ENCODE measurements at regions of chr6 and their contacts with region 1.

Region 1: GRCh38 chr6:131914967-131915751 is 36.0 kb downstream of the CCN2 start:
- DNase-seq: peak in 1 of 2 donors; percentile 70
- ATAC-seq: peak; percentile 78
- H3K4me3 ChIP-seq: no peak overlapping the region
- H3K27ac ChIP-seq: no peak overlapping the region
- H3K4me1 ChIP-seq: no peaks in the 10 kb centered on the region
- H3K27me3 ChIP-seq: no peaks in the 10 kb centered on the region

Region 2: GRCh38 chr6:132136981-132137380 is 221.8 kb after region 1 on chr6:
- intact Hi-C with region 1: no loop called
- DNase-seq: no peak
- ATAC-seq: no peak
- H3K4me3 ChIP-seq: no peak overlapping the region
- H3K27ac ChIP-seq: no peak overlapping the region
- H3K4me1 ChIP-seq: peaks cover 3 to 15% of the 10 kb centered on the region in 2 donors
- H3K27me3 ChIP-seq: no peaks in the 10 kb centered on the region

Region 3: DNA sequence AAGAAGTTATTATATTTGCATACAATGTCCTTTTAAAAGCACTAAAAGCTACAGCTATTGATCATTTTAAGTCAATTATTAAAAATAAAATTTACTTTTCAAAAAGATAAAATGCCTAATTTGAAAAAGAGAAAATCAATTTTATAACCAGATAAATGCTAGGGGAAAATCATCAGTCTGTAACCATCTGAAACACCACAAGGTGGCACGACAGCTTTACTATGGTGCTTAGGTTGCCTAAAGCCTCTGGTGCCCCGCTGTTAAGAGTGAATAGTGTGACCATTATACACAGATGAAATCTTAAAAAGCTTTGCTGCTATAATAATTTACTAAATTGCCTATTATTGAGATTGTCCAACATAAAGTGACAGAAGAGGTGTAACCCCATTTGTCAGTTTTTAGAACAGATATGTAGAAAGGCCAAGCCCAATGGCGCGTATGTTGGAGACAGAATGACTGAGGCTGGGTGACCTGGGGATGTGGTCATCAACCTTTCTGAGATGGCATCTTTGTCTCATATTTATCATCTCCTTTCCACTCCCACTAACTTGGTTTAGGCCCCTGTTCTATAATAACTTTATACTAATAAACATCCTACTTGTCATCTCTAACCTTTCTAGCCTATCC is 385.3 kb after region 1 on chr6:
- intact Hi-C with region 1: loop called in 1 of 2 experiments (anchors 5 kb)
- DNase-seq: no peak
- ATAC-seq: no peak
- H3K4me3 ChIP-seq: no peak overlapping the region
- H3K27ac ChIP-seq: no peak overlapping the region
- H3K4me1 ChIP-seq: no peaks in the 10 kb centered on the region
- H3K27me3 ChIP-seq: peaks cover 0 to 1% of the 10 kb centered on the region in 2 donors